CD4-positive, alpha-beta T cell (primary cell): ENCODE measurements at regions of chr19 and their contacts with region 1.

Region 1: GRCh38 chr19:55476100-55476775 is at the start of gene ZNF628:
- DNase-seq: peak; percentile 94 to 99 (median 98)
- ATAC-seq: peak; percentile 93
- H3K4me3 ChIP-seq: peak within 1 kb of the TSS; percentile 76
- H3K4me3 Mint-ChIP-seq: peak within 1 kb of the TSS; percentile 91
- H3K27ac ChIP-seq: peak within 1 kb of the TSS; percentile 72 to 77
- H3K27ac Mint-ChIP-seq: peak within 1 kb of the TSS; percentile 93
- H3K4me1 ChIP-seq: peaks cover 26% of the 10 kb centered on the region
- H3K4me1 Mint-ChIP-seq: peaks cover 38% of the 10 kb centered on the region
- H3K27me3 ChIP-seq: no peaks in the 10 kb centered on the region
- H3K27me3 Mint-ChIP-seq: no peaks in the 10 kb centered on the region
- CTCF ChIP-seq: no peak
- total RNA-seq, gene ZNF628: 26.6 to 27.2 TPM

Region 2: DNA sequence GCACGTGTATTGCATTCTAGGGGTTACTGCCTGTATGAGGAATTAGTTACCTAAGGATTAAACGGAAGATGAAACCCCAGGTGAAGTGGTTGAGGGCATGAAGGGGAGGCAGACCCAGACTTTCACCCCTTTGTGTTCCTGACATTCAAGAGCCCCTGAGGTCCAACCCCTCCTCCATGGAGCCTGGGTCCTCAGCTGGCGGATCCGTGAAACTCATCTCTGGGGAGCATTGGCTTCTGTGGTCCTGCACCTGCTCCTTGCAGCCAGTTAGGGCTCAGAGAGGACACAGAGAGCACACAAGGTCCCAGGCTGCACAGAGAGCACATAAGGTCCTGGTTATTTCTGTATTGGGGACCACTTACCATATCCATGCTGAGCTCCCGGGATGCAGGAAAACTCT is 889.8 kb before region 1 on chr19:
- CTCF ChIA-PET with region 1: no interaction called
- POLR2A ChIA-PET with region 1: no interaction called
- intact Hi-C with region 1: no loop called
- DNase-seq: no peak
- ATAC-seq: no peak
- H3K4me3 ChIP-seq: no peak overlapping the region
- H3K4me3 Mint-ChIP-seq: no peak overlapping the region
- H3K27ac ChIP-seq: no peak overlapping the region
- H3K27ac Mint-ChIP-seq: no peak overlapping the region
- H3K4me1 ChIP-seq: no peaks in the 10 kb centered on the region
- H3K4me1 Mint-ChIP-seq: no peaks in the 10 kb centered on the region
- H3K27me3 ChIP-seq: peaks cover 9 to 16% of the 10 kb centered on the region in 2 experiments
- H3K27me3 Mint-ChIP-seq: peaks cover 56% of the 10 kb centered on the region
- CTCF ChIP-seq: no peak

Region 3: DNA sequence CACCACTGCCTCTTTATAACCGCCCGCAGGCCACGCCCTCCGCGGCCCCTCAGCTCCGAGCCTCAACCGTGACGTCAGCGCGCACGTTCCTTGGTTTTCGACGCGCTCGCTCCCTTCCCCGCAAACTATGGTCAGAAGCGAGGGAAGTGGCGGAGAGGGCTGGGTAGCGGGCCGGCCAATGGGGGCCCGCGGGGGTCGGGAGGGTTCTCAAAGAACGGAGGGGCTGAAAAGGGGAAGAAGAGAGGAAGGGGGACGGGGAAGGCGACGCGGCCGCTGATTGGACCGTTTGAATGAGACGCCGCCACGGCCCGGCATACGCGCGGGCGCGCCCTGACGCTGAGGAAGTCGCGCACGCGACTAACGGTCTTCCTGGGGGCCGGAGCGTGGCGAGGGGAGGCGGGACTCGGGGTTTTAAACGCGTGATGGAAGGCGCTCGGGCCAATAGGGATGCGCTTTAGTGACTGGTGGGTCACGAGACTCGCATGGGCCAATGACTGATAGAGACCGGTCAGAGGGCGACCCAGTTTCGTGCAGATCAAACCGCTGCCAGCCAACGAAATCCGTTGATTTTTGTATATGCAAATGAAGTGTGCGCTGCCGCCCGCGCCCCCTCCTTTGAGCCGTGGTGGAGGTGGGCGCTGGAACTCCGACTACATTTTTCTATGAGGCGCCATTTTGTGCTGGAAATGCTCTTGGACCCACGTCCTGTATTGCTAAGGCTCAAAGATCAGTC is 68.3 kb before region 1 on chr19:
- CTCF ChIA-PET with region 1: no interaction called
- POLR2A ChIA-PET with region 1: interaction called, 19 read pairs
- intact Hi-C with region 1: loop called in 1 of 2 experiments (anchors 2 kb)
- DNase-seq: peak; percentile 91 to 99 (median 96)
- ATAC-seq: peak; percentile 92
- H3K4me3 ChIP-seq: peak overlapping the region; percentile 61
- H3K4me3 Mint-ChIP-seq: peak overlapping the region; percentile 94
- H3K27ac ChIP-seq: peak overlapping the region; percentile 96 to 100
- H3K27ac Mint-ChIP-seq: peak overlapping the region; percentile 99
- H3K4me1 ChIP-seq: peaks cover 30% of the 10 kb centered on the region
- H3K4me1 Mint-ChIP-seq: peaks cover 29% of the 10 kb centered on the region
- H3K27me3 ChIP-seq: no peaks in the 10 kb centered on the region
- H3K27me3 Mint-ChIP-seq: no peaks in the 10 kb centered on the region
- CTCF ChIP-seq: no peak

Region 4: GRCh38 chr19:55494172-55494761 is 18.0 kb after region 1 on chr19:
- CTCF ChIA-PET with region 1: no interaction called
- POLR2A ChIA-PET with region 1: no interaction called
- intact Hi-C with region 1: no loop called
- DNase-seq: peak in 1 of 14 experiments; percentile 12
- ATAC-seq: no peak
- H3K4me3 ChIP-seq: no peak overlapping the region
- H3K4me3 Mint-ChIP-seq: no peak overlapping the region
- H3K27ac ChIP-seq: no peak overlapping the region
- H3K27ac Mint-ChIP-seq: no peak overlapping the region
- H3K4me1 ChIP-seq: peaks cover 5% of the 10 kb centered on the region
- H3K4me1 Mint-ChIP-seq: no peaks in the 10 kb centered on the region
- H3K27me3 ChIP-seq: peaks cover 0 to 5% of the 10 kb centered on the region in 2 experiments
- H3K27me3 Mint-ChIP-seq: no peaks in the 10 kb centered on the region
- CTCF ChIP-seq: no peak